Cardiac septum (tissue), 1 donor: ENCODE measurements at regions of chr7 and their contacts with region 1.

Region 1: GRCh38 chr7:50793115-50793946 is 10.6 kb upstream of the GRB10 start:
- DNase-seq: peak; percentile 86

Region 2: DNA sequence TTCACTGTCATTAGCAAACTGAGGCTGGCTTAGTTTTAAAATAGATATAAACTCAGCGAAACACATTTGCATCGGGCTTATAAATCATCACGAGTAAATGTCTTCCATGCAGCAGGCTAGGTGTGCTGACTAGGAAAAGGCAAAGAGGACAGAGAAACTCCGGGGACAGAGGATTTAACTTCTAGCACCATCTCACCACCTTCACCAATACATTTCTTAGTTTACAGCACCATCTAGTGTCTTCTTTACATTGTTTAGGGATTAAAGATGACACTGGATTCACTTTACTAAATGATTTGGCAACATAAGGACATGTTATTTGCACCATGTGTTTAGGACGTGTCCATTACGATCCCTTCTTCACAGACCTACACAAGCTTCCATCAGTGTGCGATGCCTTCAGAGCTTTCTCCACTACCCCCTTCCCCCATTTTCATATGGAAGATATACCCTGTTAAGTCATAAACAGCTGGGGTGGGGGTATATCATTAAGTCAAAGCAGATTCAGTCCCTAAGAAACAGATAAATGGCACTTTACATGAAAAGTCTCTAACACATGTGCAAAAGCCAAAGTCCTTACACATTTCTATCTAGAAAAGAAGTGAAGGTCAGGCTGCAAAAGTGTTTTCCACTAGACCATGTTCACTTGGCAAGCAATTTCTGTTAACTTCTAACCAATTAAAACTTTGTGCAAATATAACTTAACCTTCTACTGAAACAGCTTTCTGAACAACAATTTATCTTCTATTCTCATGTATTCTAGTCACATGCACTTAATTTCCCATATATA is 113.9 kb before region 1 on chr7:
- intact Hi-C with region 1: loop called (anchors 5 kb)
- DNase-seq: no peak

Region 3: DNA sequence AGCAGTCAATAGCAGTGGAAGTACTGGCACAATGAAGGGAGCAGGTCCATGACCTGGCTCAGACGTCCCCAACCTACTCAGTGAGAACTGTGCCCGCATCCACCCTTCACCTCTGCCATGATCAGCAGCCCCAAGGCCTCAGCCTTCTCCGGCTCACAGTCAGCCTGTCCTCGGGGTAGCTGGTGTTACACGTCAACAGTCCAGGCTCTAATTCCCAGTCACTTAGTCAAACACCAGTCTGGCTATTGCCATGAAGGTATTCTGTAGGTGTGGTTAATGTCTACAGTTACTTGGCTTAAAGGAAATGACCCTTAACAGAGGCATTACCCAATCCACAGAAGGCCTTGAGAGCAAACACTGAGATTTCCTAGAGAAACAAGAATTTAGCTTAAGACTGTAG is 59.8 kb before region 1 on chr7:
- intact Hi-C with region 1: loop called (anchors 5 kb)
- DNase-seq: no peak

Region 4: GRCh38 chr7:50838675-50839377 is 45.5 kb after region 1 on chr7:
- intact Hi-C with region 1: loop called (anchors 5 kb)
- DNase-seq: no peak

Region 5: DNA sequence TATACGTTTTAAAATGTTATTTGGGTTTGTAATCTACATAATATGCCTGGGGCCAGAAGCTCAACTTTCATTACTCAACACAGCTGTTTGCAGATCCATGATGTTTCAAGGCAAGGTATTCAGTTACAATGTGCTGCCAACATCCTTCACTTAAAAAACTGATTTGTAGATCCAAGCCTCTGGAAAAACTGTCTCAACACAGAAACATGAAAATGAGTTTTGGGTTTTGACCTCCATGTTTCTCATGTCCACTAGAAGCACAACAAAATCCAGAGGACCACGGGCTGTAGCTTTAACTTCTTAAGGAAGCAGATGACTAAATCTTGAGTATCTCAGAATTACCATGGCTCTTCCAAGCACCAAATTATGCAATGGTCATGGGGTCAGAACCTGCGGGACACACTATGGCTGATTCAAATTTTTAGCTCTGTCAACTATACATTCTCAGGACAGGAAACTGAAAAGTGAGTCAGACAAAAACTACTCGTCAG is 236.4 kb after region 1 on chr7:
- intact Hi-C with region 1: no loop called
- DNase-seq: no peak

Region 6: GRCh38 chr7:51067757-51068156 is 274.4 kb after region 1 on chr7:
- intact Hi-C with region 1: loop called (anchors 10 kb)
- DNase-seq: no peak

Region 7: DNA sequence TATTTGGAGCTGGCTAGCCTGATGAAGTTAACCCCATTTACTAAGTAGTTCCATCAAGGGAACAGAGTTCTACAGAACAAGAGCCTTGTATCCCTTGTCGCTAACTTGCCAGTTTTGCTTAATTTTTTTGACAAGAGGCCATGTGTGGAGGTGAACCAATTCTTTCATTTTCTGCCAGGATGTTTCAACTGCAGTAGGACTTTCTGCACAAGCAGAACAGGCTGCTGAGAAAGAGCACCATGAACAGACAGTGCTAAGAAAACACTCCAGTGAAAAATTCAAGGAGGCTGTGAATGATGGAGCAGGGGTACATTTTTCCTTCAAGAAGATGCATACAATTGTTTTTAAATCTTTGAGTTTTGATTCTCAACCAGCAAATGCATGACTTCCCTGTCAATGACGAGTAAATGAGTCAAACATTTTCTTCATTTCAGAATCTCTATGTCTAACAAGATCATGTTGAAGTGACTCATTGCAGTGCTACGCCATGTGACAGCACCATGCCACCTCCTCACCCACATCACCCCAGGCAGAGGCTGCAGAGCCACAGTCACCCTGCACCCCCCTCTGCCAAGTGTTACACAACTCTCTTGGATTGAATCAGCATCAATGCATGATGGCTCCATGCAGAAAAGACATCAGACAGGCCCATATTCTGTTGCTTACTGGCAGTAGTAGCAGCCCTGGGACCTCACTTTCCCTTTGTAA is 330.1 kb after region 1 on chr7:
- intact Hi-C with region 1: loop called (anchors 5 kb)
- DNase-seq: no peak